Psoas muscle (tissue), 8 donors: ENCODE measurements at regions of chr12 and their contacts with region 1.

Region 1: DNA sequence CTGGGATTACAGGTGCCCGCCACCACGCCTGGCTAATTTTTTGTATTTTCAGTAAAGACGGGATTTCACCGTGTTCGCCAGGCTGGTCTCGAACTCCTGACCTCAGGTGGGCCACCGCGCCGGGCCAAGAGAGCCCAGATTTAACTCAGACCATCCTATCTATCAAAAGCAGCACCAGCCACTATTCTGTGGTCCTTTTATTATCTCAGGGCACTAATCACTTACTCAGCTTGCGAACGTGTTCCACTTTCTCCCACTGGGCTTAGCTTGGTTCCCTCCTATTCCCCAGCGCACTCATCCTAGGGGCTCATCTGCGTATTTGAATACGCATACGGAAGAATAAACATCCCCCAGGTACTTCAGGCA is 16.2 kb upstream of the AACS start:
- DNase-seq: no peak
- ATAC-seq: peak in 1 of 4 donors; percentile 39
- H3K4me3 ChIP-seq: peak overlapping the region; percentile 71
- H3K27ac ChIP-seq: peak overlapping the region; percentile 27
- H3K4me1 ChIP-seq: no peaks in the 10 kb centered on the region
- H3K27me3 ChIP-seq: no peaks in the 10 kb centered on the region
- CTCF ChIP-seq: no peak

Region 2: GRCh38 chr12:124992874-124993625 is 56.0 kb before region 1 on chr12:
- intact Hi-C with region 1: loop called in 1 of 2 experiments (anchors 5 kb)
- DNase-seq: no peak
- ATAC-seq: peak in 2 of 4 donors; percentile 50 to 62
- H3K4me3 ChIP-seq: peak overlapping the region; percentile 72
- H3K27ac ChIP-seq: no peak overlapping the region
- H3K4me1 ChIP-seq: peaks cover 18% of the 10 kb centered on the region
- H3K27me3 ChIP-seq: no peaks in the 10 kb centered on the region
- CTCF ChIP-seq: no peak

Region 3: DNA sequence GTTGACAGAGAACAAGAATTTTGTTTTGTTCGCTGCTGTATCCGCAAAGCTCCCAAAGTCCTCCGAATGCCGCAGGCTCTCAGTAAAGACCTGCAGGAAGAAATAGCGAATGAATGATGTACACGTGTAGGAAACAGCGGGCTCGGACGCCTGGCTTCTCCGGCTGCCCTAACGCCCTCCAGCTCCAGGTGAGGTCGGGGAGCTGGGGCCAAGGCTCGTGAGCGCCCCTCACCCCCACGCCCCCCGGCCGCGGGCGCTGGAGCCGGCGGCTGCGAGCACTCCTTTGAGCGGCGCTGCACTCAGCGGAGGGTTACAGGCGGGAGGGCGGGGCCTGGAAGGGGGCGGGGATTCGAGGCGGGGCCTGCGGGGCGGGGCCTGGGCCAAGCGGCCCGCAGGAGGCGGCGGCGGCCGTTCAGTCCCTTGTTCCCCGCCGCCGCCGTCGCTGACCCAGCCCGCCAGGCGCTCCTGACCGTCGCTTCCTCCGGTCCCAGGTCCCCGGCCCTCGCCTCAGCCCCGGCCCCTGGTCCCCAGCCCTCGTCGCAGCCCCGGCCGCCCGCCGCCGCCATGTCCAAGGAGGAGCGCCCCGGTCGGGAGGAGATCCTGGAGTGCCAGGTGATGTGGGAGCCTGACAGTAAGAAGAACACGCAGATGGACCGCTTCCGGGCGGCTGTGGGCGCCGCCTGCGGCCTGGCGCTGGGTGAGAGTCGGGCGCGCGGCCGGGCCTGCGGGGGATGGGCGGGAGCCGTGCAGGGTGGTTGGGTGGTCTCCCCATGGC is 16.1 kb after region 1 on chr12 and contains the start of gene AACS:
- intact Hi-C with region 1: loop called in 1 of 2 experiments (anchors 2 kb)
- DNase-seq: peak; percentile 78 to 87
- ATAC-seq: peak; percentile 95 to 99 (median 98)
- H3K4me3 ChIP-seq: peak within 1 kb of the TSS; percentile 88
- H3K27ac ChIP-seq: peak within 1 kb of the TSS; percentile 72
- H3K4me1 ChIP-seq: peaks cover 15% of the 10 kb centered on the region
- H3K27me3 ChIP-seq: no peaks in the 10 kb centered on the region
- CTCF ChIP-seq: no peak
- total RNA-seq, gene AACS: 4.0 to 9.5 (median 5.4) TPM

Region 4: DNA sequence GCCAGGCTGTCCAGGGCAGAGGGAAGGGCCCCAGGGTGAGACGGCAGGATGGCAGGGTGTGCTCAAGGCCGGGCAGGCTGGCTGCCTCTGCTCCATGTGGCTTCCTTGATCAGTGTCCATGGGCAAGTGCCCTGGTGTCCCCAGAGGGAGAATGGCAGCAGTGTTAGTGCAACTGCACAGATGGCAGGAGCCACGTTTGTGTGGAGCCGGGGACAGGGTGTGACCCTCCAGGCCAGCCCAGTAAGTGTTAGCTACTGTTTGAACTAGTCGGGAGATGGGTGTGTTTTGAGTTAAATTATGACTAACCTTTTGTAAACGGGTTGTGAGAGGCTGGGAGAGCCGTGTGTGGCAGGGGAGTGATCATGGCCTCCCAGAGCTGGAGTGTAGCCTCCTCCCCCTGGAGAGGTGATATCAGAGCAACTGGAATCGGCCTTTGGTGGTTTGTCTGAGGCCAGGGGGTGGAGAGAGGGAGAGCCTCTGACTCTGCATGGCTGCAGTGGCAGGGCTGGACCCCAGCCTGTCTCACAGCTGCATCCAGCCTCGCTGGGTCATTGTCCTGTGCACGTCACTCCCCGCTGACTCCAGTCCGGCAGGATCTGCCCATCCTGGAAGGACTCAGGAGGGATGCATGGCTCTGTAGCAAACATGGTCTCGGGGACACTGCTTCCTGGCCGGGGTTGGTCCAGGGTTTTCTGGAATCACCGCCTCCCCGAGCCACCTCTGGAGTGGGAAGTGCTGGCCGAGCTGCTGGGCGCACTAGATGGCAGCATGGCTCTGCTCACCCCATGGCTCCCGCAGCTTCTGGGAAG is 44.0 kb after region 1 on chr12:
- intact Hi-C with region 1: no loop called
- DNase-seq: peak; percentile 35 to 68
- ATAC-seq: peak; percentile 17 to 50 (median 36)
- H3K4me3 ChIP-seq: no peak overlapping the region
- H3K27ac ChIP-seq: no peak overlapping the region
- H3K4me1 ChIP-seq: no peaks in the 10 kb centered on the region
- H3K27me3 ChIP-seq: no peaks in the 10 kb centered on the region
- CTCF ChIP-seq: no peak

Region 5: GRCh38 chr12:125220404-125220803 is 171.3 kb after region 1 on chr12:
- intact Hi-C with region 1: no loop called
- DNase-seq: no peak
- ATAC-seq: no peak
- H3K4me3 ChIP-seq: no peak overlapping the region
- H3K27ac ChIP-seq: no peak overlapping the region
- H3K4me1 ChIP-seq: no peaks in the 10 kb centered on the region
- H3K27me3 ChIP-seq: peaks cover 0 to 9% (median 3%) of the 10 kb centered on the region in 3 donors
- CTCF ChIP-seq: no peak